ENCODE measurements at regions of chr21 and their contacts with region 1.

Region 1: DNA sequence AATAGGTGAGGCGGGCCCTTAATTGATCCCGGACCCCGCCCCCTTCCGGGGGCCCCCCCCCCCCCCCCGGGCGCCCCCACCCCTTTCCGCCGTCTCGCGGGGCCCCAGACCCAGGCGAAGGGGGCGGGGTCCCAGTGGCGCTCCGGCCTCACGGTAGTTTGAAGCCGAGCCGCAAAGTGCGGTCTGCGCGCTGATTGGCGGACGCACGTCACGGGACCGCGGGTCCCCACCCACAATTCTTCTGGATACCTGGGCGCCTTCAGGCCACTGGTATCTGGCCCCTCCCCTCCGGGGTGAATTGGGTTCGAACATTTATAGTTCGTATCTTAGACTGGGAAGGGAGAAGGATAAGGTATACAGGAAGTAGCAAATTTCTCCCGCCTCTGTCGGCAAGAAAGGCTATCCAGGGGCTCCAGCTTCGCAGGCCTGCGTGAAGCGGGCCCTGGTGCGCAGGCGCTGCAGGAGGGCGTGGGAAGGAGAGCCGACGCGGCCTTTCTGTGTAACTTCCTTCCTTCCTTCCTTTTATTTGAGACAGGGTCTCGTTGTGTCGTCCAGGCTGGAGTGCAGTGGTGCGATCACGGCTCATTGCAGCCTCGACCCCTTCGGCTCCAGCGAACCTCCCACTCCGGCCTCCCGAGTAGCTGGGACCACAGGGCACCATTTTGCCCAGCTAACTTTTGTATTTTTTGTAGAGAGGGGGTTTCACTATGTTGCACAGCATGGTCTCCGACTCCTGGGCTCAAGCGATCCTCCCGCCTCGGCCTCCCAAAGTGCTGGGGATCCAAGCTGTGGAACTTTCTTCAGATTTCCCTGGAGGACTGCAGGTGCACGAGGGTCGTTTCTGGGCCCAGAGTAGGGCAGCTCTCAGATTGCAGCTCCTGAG is 564 bp upstream of the HMGN1 start:
- DNase-seq: peak; percentile 99
- H3K4me3 Mint-ChIP-seq: peak overlapping the region; percentile 99
- H3K27ac Mint-ChIP-seq: peak overlapping the region; percentile 99
- H3K4me1 Mint-ChIP-seq: peaks cover 33% of the 10 kb centered on the region
- H3K27me3 Mint-ChIP-seq: peaks cover 4% of the 10 kb centered on the region

Region 2: DNA sequence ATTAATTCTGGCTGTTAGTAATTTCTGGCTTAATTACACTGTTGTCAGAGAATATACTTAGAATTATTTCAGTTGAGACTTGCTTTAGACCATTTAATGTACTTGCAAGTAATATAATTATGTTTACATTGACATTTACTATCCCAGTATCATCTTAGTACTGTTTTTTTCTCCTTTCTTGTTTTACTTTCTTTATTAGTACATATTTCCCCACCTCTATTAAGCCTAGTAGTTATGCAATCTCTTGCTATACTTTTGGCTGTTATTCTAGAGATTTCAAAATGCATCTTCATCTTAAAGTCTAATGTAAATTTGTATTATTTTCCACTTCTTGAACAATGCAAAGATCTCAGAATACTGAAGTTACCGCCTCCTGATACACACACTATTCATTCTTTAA is 60.5 kb before region 1 on chr21:
- intact Hi-C with region 1: no loop called
- DNase-seq: no peak
- H3K4me3 Mint-ChIP-seq: no peak overlapping the region
- H3K27ac Mint-ChIP-seq: no peak overlapping the region
- H3K4me1 Mint-ChIP-seq: no peaks in the 10 kb centered on the region
- H3K27me3 Mint-ChIP-seq: no peaks in the 10 kb centered on the region

Region 3: DNA sequence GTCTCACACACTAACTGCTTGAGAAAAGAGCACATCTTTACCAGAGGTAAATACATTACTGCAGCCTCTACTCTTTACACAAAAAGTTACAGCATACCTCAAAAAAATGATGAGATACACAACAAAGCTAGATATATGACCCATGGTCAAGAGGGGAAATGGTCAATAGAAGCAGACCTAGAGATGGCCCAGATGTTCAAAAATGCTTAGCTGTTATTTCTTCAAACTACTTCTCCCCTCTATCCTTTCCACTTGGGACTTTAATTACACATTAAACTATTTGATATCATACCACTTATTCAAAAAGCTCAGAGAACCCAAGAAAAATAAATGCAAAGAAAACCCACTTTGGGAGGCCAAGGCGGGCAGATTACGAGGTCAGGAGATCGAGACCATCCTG is 48.9 kb before region 1 on chr21:
- intact Hi-C with region 1: no loop called
- DNase-seq: no peak
- H3K4me3 Mint-ChIP-seq: no peak overlapping the region
- H3K27ac Mint-ChIP-seq: no peak overlapping the region
- H3K4me1 Mint-ChIP-seq: peaks cover 10% of the 10 kb centered on the region
- H3K27me3 Mint-ChIP-seq: no peaks in the 10 kb centered on the region

Region 4: DNA sequence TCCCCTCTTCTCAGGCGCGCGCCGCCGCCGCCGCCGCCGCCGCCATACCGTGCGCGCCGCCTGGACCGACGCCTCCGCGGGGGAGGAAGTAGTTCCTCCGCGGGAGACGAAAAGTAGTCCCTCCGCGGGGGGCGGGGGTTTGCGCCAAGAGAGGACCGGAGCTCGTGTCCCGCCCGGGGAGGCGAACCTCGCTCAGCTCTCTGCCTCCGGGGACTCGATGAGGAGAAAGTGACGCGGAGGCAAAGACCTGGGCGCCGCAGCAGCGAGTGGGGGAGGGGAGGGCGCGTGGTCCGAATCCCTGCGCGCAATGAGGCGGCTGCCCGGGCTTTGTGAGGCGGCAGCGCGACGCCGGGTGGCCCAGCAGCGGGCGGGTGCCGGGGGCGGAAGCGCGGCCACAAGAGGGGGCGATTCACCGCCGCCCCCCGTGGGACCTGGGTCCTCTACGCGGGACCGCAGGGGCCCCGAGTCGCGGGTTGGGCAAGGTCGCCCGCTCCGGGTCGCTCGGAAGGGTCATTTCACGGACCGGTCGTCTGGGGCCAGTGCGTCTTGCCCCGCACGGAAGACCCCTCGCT is 35.8 kb before region 1 on chr21 and contains the start of gene BRWD1:
- intact Hi-C with region 1: loop called (anchors 1 kb)
- DNase-seq: peak; percentile 94
- H3K4me3 Mint-ChIP-seq: peak within 1 kb of the TSS; percentile 97
- H3K27ac Mint-ChIP-seq: peak within 1 kb of the TSS; percentile 98
- H3K4me1 Mint-ChIP-seq: peaks cover 32% of the 10 kb centered on the region
- H3K27me3 Mint-ChIP-seq: no peaks in the 10 kb centered on the region
- total RNA-seq, gene BRWD1: 29.7 and 31.9 TPM in 2 replicates

Region 5: DNA sequence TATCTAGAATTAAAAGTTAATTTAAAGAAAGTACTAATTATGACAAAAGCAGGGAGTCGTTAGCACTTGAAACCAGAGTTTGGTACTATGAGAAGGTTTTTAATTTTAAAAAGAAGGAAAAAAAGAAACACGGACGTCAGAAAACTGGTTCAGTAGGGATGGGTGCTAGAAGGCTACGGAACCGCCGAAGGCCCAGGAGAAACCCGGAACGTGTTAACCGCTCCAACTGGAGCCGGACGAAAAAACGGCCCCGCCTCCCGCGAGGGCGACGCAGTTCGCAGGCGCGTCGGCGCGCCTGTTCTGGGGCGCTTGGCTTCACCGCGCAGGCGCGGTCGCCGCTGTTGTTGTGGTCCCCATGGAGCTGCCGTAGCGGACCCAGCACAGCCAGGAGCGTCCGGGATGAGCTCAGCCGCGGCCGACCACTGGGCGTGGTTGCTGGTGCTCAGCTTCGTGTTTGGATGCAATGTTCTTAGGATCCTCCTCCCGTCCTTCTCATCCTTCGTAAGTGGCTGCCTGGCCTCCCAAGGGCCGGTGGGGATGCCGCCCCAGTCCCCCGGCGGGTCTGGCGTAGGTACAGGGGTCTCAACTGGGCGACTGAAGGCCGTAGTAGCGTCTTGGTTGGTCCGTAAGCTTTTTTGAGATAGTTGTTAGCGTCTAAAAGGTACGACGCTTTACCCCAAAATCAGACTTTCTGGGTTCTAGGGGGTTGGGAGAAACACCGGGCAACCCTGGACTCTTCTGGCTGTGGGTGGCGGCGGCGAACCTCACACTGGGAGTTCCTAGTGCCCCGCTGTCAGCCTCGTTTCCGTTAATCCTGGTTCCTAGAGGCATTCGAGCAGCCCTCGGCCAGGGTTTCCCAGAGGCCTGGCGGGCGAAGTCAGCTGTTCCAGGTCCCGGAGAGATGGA is 30.8 kb after region 1 on chr21:
- intact Hi-C with region 1: loop called (anchors 1 kb)
- DNase-seq: peak; percentile 98
- H3K4me3 Mint-ChIP-seq: peak overlapping the region; percentile 97
- H3K27ac Mint-ChIP-seq: peak overlapping the region; percentile 94
- H3K4me1 Mint-ChIP-seq: peaks cover 15% of the 10 kb centered on the region
- H3K27me3 Mint-ChIP-seq: no peaks in the 10 kb centered on the region

Region 6: DNA sequence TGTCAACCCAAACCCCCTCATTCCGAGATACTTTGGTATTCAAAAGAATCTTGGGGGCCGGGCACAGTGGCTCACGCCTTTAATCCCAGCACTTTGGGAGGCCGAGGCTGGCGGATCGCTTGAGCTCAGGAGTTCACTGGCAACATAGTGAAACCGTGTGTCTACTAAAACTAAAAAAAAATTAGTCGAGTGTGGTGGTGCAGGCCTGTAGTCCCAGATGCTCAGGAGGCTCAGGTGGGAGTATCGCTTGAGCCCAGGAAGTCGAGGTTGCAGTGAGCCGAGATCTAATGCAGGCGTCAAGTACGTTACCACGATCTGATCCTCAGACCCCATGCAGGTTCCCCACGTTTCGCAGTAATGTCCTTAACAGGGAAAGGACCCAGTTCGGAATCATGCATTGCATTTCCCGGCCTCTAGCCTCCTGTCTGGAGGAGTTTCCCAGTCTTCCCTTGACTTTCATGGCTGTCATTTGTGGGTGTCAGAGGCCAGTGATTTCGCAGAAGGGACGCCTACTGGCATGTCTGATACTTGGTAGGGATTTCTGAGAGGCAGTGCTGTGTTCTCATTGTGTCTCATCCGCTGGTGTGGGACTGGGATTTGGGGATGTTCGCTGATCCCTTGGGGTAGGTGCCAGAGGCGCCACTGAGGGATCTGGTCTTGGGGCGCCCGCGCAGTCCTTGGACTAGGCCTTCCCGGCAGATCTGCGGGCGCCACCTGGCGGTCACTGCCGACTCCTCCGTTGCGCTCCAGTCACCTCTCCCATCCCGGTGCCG is 38.8 kb after region 1 on chr21:
- intact Hi-C with region 1: loop called (anchors 1 kb)
- DNase-seq: peak; percentile 96
- H3K4me3 Mint-ChIP-seq: peak overlapping the region; percentile 87
- H3K27ac Mint-ChIP-seq: peak overlapping the region; percentile 91
- H3K4me1 Mint-ChIP-seq: peaks cover 20% of the 10 kb centered on the region
- H3K27me3 Mint-ChIP-seq: no peaks in the 10 kb centered on the region

Region 7: GRCh38 chr21:39445321-39446269 is 96.1 kb after region 1 on chr21 and contains the start of gene LCA5L:
- intact Hi-C with region 1: loop called (anchors 1 kb)
- DNase-seq: peak; percentile 98
- H3K4me3 Mint-ChIP-seq: peak within 1 kb of the TSS; percentile 84
- H3K27ac Mint-ChIP-seq: peak within 1 kb of the TSS; percentile 96
- H3K4me1 Mint-ChIP-seq: peaks cover 14% of the 10 kb centered on the region
- H3K27me3 Mint-ChIP-seq: peaks cover 47% of the 10 kb centered on the region
- total RNA-seq, gene LCA5L: not detected in 2 replicates